ENCODE measurements at regions of chr15 and their contacts with region 1.

Region 1: DNA sequence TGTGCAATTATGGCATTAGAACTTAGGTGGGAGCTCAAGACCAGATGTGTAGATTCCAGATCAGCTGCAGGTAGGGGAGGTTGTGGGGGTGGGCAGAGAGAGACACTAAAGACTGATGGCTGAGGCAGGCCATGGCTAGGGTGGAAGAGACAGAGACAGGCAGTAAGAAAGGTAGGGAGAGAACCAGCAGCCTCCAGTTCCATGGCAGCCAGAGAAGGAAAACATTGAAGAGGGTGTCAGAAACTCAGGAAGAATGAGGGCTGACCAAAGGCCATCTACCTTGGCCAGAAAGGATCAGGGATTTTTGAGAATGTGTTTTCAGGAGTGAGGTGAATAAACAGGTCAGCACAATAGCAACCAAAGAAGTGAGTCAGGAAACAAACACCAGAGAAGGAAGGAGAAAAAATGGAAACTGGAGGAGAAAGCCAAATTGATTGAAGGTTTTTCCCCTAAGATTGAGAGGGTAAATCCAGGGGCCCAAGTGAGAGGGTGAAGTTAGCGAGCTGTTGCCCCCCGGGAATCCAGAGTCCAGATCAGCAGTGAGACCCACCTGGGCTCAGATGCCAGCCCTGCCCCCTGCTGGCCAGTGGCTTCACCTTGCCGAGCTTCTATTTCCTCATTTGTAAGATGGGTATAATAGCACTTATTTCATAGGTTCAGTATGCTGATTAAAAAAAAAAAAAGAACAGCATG is 41.0 kb downstream of the ABHD2 start:
- DNase-seq: peak; percentile 44 to 52 (median 48)
- H3K4me3 ChIP-seq: no peak overlapping the region
- H3K4me3 Mint-ChIP-seq: no peak overlapping the region
- H3K27ac ChIP-seq: no peak overlapping the region
- H3K27ac Mint-ChIP-seq: no peak overlapping the region
- H3K4me1 ChIP-seq: peaks cover 24% of the 10 kb centered on the region
- H3K4me1 Mint-ChIP-seq: peaks cover 13 to 33% (median 18%) of the 10 kb centered on the region in 4 donors
- H3K27me3 ChIP-seq: no peaks in the 10 kb centered on the region
- H3K27me3 Mint-ChIP-seq: no peaks in the 10 kb centered on the region

Region 2: GRCh38 chr15:88897456-88898194 is 231.6 kb before region 1 on chr15:
- CTCF ChIA-PET with region 1: interaction called, 33 read pairs
- POLR2A ChIA-PET with region 1: no interaction called
- intact Hi-C with region 1: loop called (anchors 1 kb)
- DNase-seq: peak; percentile 78 to 79 (median 78)
- H3K4me3 ChIP-seq: no peak overlapping the region
- H3K4me3 Mint-ChIP-seq: peak overlapping the region; percentile 20 to 80 (median 58)
- H3K27ac ChIP-seq: no peak overlapping the region
- H3K27ac Mint-ChIP-seq: peak overlapping the region; percentile 14 to 93 (median 67)
- H3K4me1 ChIP-seq: peaks cover 43% of the 10 kb centered on the region
- H3K4me1 Mint-ChIP-seq: peaks cover 28 to 58% (median 45%) of the 10 kb centered on the region in 4 donors
- H3K27me3 ChIP-seq: no peaks in the 10 kb centered on the region
- H3K27me3 Mint-ChIP-seq: no peaks in the 10 kb centered on the region

Region 3: GRCh38 chr15:89057504-89058133 is 71.7 kb before region 1 on chr15:
- CTCF ChIA-PET with region 1: interaction called, 262 read pairs
- POLR2A ChIA-PET with region 1: interaction called, 8 read pairs
- intact Hi-C with region 1: loop called (anchors 1 kb)
- DNase-seq: peak; percentile 75 to 84 (median 79)
- H3K4me3 ChIP-seq: no peak overlapping the region
- H3K4me3 Mint-ChIP-seq: no peak overlapping the region
- H3K27ac ChIP-seq: no peak overlapping the region
- H3K27ac Mint-ChIP-seq: no peak overlapping the region
- H3K4me1 ChIP-seq: no peaks in the 10 kb centered on the region
- H3K4me1 Mint-ChIP-seq: peaks cover 0 to 12% (median 7%) of the 10 kb centered on the region in 4 donors
- H3K27me3 ChIP-seq: no peaks in the 10 kb centered on the region
- H3K27me3 Mint-ChIP-seq: no peaks in the 10 kb centered on the region

Region 4: DNA sequence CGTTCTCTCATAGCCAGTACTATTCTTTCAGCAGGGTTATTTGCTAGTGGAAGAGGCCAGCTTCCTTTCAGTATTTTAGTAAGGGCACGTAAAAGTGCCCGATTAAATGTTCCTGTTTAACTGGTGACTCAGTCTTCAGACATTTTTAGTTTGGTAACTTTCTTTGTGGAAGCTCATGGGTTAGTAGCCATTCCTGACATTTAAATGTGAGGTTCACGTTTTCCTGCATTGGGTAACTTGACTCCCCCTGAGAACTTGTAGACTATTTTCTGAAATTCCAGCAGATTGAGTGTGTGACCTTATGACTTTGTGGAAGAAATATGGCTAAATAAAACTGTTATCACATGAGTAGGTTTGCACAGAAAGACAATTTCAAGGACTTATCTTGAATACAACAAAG is 24.1 kb before region 1 on chr15:
- CTCF ChIA-PET with region 1: interaction called, 15 read pairs
- POLR2A ChIA-PET with region 1: no interaction called
- intact Hi-C with region 1: no loop called
- DNase-seq: no peak
- H3K4me3 ChIP-seq: no peak overlapping the region
- H3K4me3 Mint-ChIP-seq: no peak overlapping the region
- H3K27ac ChIP-seq: no peak overlapping the region
- H3K27ac Mint-ChIP-seq: peak overlapping the region in 1 of 7 donors; percentile 29
- H3K4me1 ChIP-seq: peaks cover 13% of the 10 kb centered on the region
- H3K4me1 Mint-ChIP-seq: peaks cover 17 to 41% (median 24%) of the 10 kb centered on the region in 4 donors
- H3K27me3 ChIP-seq: no peaks in the 10 kb centered on the region
- H3K27me3 Mint-ChIP-seq: no peaks in the 10 kb centered on the region

Region 5: DNA sequence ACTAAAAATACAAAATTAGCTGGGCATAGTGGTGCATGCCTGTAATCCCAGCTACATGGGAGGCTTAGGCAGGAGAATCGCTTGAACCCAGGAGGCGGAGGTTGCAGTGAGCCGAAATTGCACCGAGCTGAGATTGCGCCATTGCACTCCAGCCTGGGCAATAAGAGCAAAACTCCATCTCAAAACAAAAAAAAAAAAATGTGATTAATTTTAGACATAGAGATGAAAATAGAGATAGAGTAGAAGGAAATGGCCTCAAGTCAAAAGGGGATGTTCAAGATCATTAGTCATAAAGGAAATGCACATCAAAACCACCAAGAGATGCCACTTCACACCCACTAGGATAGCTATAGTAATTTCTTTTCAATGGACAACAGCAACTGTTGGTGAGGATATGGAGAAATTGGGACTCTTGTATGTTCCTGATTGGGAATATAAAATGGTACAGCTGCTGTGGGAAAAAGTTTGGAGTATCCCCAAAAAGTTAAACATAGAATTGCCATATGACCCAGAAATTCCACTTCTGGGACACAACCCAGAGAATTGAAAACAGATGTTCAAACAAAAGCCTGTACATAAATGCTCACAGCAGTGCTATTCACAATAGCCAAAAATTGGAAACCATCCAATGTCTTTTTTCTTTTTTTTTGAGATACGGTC is 14.4 kb after region 1 on chr15:
- CTCF ChIA-PET with region 1: interaction called, 19 read pairs
- POLR2A ChIA-PET with region 1: no interaction called
- intact Hi-C with region 1: no loop called
- DNase-seq: peak in 2 of 5 donors; percentile 11 to 12
- H3K4me3 ChIP-seq: no peak overlapping the region
- H3K4me3 Mint-ChIP-seq: peak overlapping the region in 2 of 8 donors; percentile 27 to 49
- H3K27ac ChIP-seq: no peak overlapping the region
- H3K27ac Mint-ChIP-seq: no peak overlapping the region
- H3K4me1 ChIP-seq: peaks cover 14% of the 10 kb centered on the region
- H3K4me1 Mint-ChIP-seq: peaks cover 11 to 31% (median 21%) of the 10 kb centered on the region in 4 donors
- H3K27me3 ChIP-seq: no peaks in the 10 kb centered on the region
- H3K27me3 Mint-ChIP-seq: no peaks in the 10 kb centered on the region

Region 6: DNA sequence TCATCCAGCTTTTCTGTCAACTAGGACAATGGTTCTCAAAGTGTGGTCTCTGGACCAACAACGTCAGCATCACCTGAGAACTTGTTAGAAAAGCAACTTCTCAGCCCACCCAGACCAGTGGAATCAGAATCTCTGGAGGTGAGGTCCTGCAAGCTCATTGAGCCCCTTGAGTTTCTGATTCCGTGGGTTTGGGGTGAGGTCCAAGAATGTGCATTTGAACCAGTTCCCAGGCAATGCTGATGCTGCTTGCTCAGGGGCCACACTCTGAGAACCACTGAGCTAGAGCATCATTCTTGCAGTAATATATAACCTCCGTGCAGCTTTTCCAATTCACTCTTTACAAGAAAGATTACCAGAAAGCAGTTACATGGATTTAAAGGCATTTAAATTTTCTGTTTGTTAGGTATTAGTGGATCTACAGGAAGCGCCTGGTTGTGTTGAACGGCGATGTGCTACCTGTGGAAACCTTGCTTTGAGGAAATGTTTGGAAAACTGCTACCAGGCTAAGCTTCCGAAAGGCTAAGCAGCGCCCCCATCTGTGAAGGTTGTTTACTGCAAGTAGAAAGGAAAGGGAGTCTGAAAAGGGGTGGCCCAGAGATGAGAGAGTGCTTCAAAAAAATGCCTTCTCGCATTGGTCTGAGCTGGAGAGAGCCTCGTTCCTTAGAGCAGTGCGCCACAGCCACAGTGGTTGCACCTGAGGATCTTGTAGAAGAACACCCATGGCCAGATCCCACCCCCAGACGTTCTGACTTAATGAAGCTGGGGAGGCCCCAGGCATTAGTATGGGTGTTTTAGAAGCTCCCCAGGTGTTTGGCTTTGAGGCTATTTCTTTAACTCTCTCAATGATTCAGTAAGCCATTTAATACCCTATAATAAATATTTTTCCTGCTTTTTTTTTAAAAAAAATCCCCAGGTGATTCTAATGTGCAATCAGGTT is 42.1 kb after region 1 on chr15:
- CTCF ChIA-PET with region 1: interaction called, 13 read pairs
- POLR2A ChIA-PET with region 1: no interaction called
- intact Hi-C with region 1: no loop called
- DNase-seq: peak in 2 of 5 donors; percentile 22 to 24
- H3K4me3 ChIP-seq: no peak overlapping the region
- H3K4me3 Mint-ChIP-seq: no peak overlapping the region
- H3K27ac ChIP-seq: no peak overlapping the region
- H3K27ac Mint-ChIP-seq: no peak overlapping the region
- H3K4me1 ChIP-seq: peaks cover 12% of the 10 kb centered on the region
- H3K4me1 Mint-ChIP-seq: peaks cover 4 to 10% (median 6%) of the 10 kb centered on the region in 4 donors
- H3K27me3 ChIP-seq: no peaks in the 10 kb centered on the region
- H3K27me3 Mint-ChIP-seq: no peaks in the 10 kb centered on the region

Measured in CD4-positive, alpha-beta memory T cell (primary cell).